ENCODE measurements at regions of chr1 and their contacts with region 1.

Region 1: GRCh38 chr1:67766141-67766978 is 66.9 kb downstream of the GNG12 start:
- DNase-seq: peak; percentile 64
- H3K4me3 ChIP-seq: peak overlapping the region; percentile 38
- CTCF ChIP-seq: peak; percentile 42

Region 2: GRCh38 chr1:67561704-67562113 is 204.7 kb before region 1 on chr1:
- CTCF ChIA-PET with region 1: interaction called, 197 read pairs
- POLR2A ChIA-PET with region 1: no interaction called
- DNase-seq: no peak
- H3K4me3 ChIP-seq: no peak overlapping the region
- CTCF ChIP-seq: peak; percentile 93

Region 3: DNA sequence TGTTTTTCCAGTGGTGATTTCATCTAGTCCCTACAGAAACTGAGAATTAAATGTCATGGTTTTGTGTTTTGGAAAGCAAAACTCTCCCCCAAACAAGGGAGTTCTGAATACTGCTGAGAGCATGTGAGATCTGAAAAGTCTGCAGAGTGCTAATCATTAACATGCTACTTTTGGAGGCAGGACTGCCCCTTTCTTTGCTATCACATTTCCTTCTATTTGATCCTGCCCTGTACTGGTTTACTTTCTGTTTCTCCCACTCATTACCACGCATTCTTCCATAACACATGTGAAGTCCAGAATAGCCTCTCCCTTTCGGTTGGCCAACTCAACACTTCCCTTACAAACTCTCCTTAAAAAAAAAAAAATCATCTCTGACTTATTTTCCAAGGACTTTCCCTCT is 17.7 kb before region 1 on chr1:
- CTCF ChIA-PET with region 1: interaction called, 53 read pairs
- POLR2A ChIA-PET with region 1: interaction called, 4 read pairs
- DNase-seq: no peak
- H3K4me3 ChIP-seq: no peak overlapping the region; the same call in 1 of the 2 replicates
- CTCF ChIP-seq: no peak

Region 4: DNA sequence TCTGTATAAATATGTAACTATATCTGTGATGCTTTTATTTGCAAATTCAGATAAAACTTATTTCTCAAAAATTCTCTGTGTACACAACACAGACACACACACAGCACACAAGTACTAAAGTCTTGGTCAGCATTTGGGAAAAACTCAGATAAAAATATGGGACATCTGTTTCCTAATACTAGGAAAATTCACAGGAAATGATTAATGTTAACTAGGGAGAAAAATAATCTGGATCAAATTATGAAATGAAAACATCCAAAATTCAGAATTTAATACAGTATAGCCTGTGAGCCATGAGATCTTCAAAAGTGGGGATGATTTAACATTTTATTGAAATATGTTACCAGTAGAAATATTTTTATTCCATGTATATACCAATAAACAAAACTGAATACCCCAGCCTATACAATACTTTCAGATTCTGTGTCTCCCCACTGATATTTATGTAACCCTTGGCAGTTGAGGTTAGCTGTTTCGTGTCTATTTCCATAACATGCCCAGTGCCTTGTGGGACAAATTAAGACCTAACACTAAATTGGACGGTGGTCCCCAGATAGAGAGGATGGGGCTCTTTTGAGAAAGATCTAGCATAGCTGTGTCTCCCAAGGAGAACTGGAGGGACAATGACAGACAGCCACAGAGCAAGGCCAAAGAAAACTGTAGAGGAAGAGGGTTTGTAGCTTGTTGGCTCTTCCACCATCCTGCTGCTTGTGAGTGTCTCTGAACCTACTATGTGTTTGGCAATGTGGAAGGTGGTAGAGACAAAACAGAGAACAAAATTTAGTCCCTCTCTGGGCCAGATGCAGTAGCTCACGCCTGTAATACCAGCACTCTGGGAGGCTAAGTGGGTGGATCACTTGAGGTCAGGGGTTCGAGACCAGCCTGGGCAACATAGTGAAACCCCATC is 19.7 kb after region 1 on chr1:
- CTCF ChIA-PET with region 1: interaction called, 96 read pairs
- POLR2A ChIA-PET with region 1: interaction called, 3 read pairs
- DNase-seq: no peak
- H3K4me3 ChIP-seq: no peak overlapping the region
- CTCF ChIP-seq: no peak

Region 5: DNA sequence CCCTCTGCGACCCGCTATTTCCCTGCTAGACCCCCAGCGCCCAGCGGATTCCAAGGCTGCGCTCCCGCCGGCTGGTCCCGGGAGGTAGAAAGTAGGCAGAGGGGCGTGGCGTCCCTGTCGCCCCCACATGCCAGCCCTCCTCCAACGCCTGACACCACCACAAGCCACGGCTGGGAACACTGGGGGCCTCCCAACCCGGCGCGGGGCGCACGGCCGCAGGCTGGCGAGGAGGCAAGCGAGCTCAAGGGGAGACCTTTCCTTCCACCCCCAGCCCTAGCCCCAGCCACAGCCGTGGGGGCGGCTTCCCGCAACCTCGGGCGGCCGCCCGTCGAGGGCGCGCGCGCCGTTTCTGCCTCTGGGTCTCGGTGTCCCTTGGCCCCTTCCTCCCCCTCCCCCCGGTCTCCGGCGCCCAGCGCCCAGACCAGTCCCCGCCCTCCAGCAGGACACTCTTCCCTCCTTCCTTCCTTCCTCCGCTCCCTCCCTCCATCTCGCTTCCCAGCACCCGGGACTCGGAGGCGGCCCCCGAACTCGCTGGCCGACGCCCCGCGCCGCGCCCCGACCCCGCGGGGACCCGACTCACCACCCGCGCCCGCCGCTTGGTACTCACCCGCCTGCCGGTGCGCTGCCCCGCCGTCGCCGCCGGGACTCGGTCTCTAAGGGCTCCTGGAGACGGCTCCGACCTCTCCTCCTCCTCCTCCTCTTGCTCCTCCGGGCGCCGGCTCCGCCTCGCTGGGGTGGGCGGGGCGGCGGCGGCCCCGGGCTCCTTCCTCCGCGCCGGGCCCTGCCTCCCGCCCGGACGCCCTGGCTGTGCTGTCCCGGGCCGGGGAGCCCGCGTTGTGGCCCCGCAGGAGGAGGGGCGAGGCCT is 66.6 kb after region 1 on chr1 and contains the start of gene GNG12:
- CTCF ChIA-PET with region 1: interaction called, 42 read pairs
- POLR2A ChIA-PET with region 1: interaction called, 6 read pairs
- DNase-seq: no peak
- H3K4me3 ChIP-seq: peak within 1 kb of the TSS; percentile 80
- CTCF ChIP-seq: no peak

Measured in AG04449 (cell line).